Activated T-helper 1 cell treated with anti-CD3 and anti-CD28 coated beads, Interleukin-12 subunit alpha, Interleukin-12 subunit beta, Interleukin-2, Interleukin-4 antibody, amounts not matched to agents 30 ng/mL and 10 ng/mL and 1 ng/mL, durations not matched to agents 14 hours and 24 hours and 36 hours (primary cell): ENCODE measurements at regions of chr6 and their contacts with region 1.

Region 1: GRCh38 chr6:44642870-44643529 is 255.5 kb downstream of the CDC5L start:
- DNase-seq: no peak
- H3K4me3 Mint-ChIP-seq: no peak overlapping the region
- H3K27ac Mint-ChIP-seq: peak overlapping the region; percentile 84
- H3K4me1 Mint-ChIP-seq: peaks cover 21% of the 10 kb centered on the region
- H3K27me3 Mint-ChIP-seq: peaks cover 2% of the 10 kb centered on the region

Region 2: GRCh38 chr6:44268095-44268628 is 374.8 kb before region 1 on chr6:
- intact Hi-C with region 1: no loop called
- DNase-seq: no peak
- H3K4me3 Mint-ChIP-seq: no peak overlapping the region
- H3K27ac Mint-ChIP-seq: no peak overlapping the region
- H3K4me1 Mint-ChIP-seq: peaks cover 42% of the 10 kb centered on the region
- H3K27me3 Mint-ChIP-seq: peaks cover 37% of the 10 kb centered on the region

Region 3: DNA sequence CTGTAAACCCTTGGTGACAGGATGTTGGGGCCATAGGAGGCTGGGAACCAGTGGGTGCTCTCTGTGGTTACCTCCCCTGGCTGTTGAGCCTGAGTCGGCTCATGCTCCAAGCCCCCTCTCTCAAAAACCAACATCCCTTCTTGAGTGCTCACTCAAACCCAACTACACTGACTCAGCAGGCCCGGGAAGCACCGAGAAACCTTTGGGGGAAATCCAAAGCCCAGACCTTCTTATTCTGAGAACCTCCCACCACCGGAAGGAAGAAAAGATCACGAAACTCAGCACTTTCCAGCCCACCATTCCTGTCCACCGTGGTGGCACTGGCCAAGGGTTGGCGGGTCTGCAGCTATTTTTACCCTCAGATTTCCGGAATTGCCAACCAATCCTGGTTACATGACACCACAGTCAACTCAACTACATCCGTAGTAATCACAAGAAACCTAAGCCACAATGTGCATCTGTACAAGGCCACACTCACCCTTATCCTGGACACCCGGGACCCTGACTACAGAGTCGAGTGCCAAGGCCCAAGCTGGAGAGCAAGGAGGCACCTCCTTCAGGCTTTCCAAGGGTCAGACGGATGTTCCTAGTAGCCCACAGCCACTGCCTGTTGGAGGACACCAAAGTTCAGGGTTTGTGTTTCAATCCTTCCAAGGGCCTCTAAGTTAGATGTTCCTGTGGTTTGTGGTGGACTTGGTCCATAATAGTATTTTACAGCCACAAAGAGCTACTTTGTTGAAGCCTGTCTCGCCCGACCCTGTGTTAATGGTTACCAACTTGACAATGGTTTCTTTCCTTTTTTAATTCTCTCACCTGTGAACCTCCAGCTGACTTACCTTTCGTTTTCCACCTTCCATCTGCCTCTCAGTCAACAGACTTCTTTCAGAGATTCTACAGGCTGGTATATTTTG is 61.5 kb after region 1 on chr6:
- intact Hi-C with region 1: loop called (anchors 5 kb)
- DNase-seq: peak; percentile 14
- H3K4me3 Mint-ChIP-seq: peak overlapping the region; percentile 13
- H3K27ac Mint-ChIP-seq: peak overlapping the region; percentile 69
- H3K4me1 Mint-ChIP-seq: peaks cover 27% of the 10 kb centered on the region
- H3K27me3 Mint-ChIP-seq: no peaks in the 10 kb centered on the region